Activated T-helper 1 cell treated with anti-CD3 and anti-CD28 coated beads, Interleukin-12 subunit alpha, Interleukin-12 subunit beta, Interleukin-2, Interleukin-4 antibody, amounts not matched to agents 30 ng/mL and 10 ng/mL and 1 ng/mL, durations not matched to agents 14 hours and 24 hours and 36 hours (primary cell): ENCODE measurements at regions of chr10 and their contacts with region 1.

Region 1: DNA sequence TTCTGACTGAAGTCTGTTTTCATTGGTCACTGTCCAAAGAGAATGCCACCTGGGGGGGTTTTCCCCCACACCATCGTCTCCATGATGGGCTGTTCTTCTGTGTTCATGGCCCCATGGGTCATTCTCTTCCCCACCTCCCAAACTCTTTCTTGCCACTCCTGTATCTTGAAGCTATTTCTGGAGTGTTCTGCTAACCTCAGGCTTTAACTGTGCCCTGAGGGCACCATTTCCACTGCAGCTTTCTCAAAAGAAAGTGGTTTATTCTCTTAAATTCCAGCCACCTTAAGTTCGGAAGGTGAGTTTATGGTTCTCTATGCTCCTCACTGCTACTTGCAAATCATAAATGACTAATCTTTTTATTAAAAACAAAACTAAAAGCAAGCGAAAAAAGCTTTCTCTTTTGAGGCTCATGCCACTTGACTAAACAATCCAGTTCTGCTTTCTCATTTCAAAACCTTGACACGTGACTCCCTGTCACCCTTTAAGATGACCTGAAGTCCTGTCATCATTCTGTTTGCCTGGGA is 7.4 kb upstream of the APBB1IP start:
- DNase-seq: peak; percentile 43
- H3K4me3 Mint-ChIP-seq: peak overlapping the region; percentile 57
- H3K27ac Mint-ChIP-seq: peak overlapping the region; percentile 81
- H3K4me1 Mint-ChIP-seq: peaks cover 16% of the 10 kb centered on the region
- H3K27me3 Mint-ChIP-seq: peaks cover 3% of the 10 kb centered on the region

Region 2: DNA sequence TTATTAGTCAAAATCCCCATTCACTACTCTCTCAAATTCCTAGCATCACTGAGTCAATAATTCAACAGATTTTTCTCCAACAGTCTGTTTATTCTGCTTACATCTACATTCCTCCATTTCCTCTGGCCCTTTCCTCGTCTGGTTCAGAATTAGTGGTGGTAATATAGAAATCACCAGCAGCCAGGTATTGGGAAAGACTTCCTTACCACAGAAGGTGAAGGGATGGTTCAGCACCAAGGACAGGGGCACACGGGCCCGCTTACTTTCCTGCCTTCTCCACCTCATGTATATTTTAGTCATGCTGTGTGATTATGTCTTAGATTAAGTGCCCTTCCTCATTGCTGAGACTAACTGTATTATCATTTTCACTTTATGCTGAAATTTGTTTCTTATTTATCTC is 62.9 kb before region 1 on chr10:
- intact Hi-C with region 1: loop called (anchors 2 kb)
- DNase-seq: no peak
- H3K4me3 Mint-ChIP-seq: no peak overlapping the region
- H3K27ac Mint-ChIP-seq: no peak overlapping the region
- H3K4me1 Mint-ChIP-seq: no peaks in the 10 kb centered on the region
- H3K27me3 Mint-ChIP-seq: peaks cover 10% of the 10 kb centered on the region

Region 3: GRCh38 chr10:26391701-26392695 is 38.7 kb before region 1 on chr10:
- intact Hi-C with region 1: loop called (anchors 2 kb)
- DNase-seq: no peak
- H3K4me3 Mint-ChIP-seq: no peak overlapping the region
- H3K27ac Mint-ChIP-seq: no peak overlapping the region
- H3K4me1 Mint-ChIP-seq: no peaks in the 10 kb centered on the region
- H3K27me3 Mint-ChIP-seq: peaks cover 23% of the 10 kb centered on the region

Region 4: DNA sequence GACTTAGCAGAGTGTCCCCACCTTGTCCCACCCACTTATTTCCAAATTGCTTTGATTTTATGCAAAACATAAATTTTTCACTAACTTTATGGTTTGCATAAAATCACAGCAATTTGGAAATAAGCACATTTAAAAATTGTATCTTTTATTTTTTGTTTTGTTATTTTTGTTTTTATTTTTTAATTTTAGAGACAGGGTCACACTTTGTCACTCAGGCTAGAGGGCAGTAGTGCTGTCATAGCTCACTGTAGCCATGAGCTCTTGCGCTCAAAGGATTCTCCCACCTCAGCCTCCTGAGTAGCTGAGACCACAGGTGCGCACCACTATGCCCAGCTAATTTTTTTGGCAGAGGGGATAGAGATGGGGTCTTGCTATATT is 50.6 kb after region 1 on chr10:
- intact Hi-C with region 1: no loop called
- DNase-seq: no peak
- H3K4me3 Mint-ChIP-seq: no peak overlapping the region
- H3K27ac Mint-ChIP-seq: peak overlapping the region; percentile 94
- H3K4me1 Mint-ChIP-seq: peaks cover 72% of the 10 kb centered on the region
- H3K27me3 Mint-ChIP-seq: no peaks in the 10 kb centered on the region

Region 5: DNA sequence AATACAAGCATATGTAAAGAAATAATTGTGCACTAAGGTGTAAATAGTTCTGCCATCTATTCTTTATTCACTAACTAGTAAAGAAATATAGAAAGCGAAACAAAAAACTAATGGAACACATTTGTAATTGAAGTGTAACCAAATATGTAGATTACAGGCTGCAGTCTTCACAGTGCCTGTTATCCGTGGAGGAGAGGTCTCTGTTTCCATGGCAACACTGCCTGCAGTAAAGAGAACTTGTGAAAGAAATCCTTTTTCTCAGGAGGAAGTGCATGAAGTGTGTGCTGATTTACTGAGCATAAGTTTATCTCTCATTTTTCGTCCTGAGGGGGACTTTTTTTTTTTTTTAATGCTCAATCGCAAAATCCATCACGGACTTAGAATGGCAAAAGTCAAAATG is 109.9 kb after region 1 on chr10:
- intact Hi-C with region 1: loop called (anchors 5 kb)
- DNase-seq: no peak
- H3K4me3 Mint-ChIP-seq: no peak overlapping the region
- H3K27ac Mint-ChIP-seq: peak overlapping the region; percentile 40
- H3K4me1 Mint-ChIP-seq: peaks cover 23% of the 10 kb centered on the region
- H3K27me3 Mint-ChIP-seq: no peaks in the 10 kb centered on the region